Mammary epithelial cell (primary cell): ENCODE measurements at regions of chr6 and their contacts with region 1.

Region 1: DNA sequence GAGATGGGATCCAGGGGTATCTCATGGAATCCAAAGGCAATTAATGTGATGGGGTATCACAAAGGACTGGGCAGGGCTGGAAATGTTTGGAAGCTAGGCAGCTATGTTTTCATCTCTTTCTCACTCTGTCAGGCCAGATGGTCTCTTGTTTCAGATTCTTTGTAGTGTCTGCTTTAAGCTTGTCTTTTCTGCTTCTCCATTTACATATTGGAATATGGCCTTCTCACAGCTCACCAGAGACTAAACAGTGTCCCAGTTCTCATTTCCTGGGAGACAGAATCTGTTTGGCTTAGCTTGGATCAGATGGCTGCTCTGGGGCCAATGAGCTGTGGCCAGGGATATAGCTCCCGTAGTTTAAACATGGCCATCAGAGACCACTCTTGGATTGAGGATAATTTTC is 78.9 kb downstream of the SLC35F1 start:
- DNase-seq: no peak
- H3K4me3 ChIP-seq: no peak overlapping the region
- H3K27ac ChIP-seq: no peak overlapping the region
- H3K4me1 ChIP-seq: no peaks in the 10 kb centered on the region
- H3K27me3 ChIP-seq: no peaks in the 10 kb centered on the region
- CTCF ChIP-seq: no peak

Region 2: DNA sequence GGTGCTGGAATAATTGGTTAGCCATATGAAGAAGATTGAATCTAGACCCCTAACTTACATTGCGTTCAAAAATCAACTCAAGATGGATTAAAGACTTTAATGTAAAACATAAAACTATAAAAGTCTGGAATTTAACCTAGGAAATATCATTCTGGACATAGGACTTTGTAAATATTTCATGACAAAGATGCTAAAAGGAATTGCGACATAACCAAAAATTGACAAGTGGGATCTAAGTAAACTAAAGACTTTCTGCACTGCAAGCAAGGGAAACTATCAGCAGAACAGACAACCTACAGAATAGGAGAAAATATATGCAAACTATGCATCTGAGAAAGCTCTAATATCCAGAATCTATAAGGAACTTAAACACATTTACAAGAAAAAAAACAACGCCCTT is 124.4 kb before region 1 on chr6:
- CTCF ChIA-PET with region 1: no interaction called
- dilution Hi-C with region 1: no loop called
- in situ Hi-C with region 1: no loop called
- intact Hi-C with region 1: no loop called
- DNase-seq: no peak
- H3K4me3 ChIP-seq: no peak overlapping the region
- H3K27ac ChIP-seq: no peak overlapping the region
- H3K4me1 ChIP-seq: no peaks in the 10 kb centered on the region
- H3K27me3 ChIP-seq: no peaks in the 10 kb centered on the region
- CTCF ChIP-seq: no peak

Region 3: DNA sequence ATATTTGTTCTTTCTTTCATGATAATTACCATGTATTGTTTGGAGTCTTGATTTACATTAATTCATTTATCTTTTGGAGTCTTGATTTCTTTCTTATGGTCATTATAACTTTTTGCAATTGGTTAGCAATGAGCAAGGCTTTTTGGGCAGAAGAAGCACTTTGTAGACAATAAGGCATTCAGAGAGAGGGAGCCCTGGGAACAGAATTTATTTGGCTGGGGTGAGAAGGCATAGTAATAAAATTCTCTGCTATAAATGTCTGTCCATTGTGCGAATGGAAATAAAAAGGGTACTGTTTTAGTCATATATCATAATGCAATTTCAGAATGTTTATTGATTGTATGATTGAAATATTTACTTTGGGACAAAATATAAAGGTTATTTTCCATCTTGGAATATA is 68.2 kb after region 1 on chr6:
- CTCF ChIA-PET with region 1: no interaction called
- dilution Hi-C with region 1: no loop called
- in situ Hi-C with region 1: no loop called
- intact Hi-C with region 1: no loop called
- DNase-seq: no peak
- H3K4me3 ChIP-seq: no peak overlapping the region
- H3K27ac ChIP-seq: no peak overlapping the region
- H3K4me1 ChIP-seq: no peaks in the 10 kb centered on the region
- H3K27me3 ChIP-seq: no peaks in the 10 kb centered on the region
- CTCF ChIP-seq: no peak

Region 4: DNA sequence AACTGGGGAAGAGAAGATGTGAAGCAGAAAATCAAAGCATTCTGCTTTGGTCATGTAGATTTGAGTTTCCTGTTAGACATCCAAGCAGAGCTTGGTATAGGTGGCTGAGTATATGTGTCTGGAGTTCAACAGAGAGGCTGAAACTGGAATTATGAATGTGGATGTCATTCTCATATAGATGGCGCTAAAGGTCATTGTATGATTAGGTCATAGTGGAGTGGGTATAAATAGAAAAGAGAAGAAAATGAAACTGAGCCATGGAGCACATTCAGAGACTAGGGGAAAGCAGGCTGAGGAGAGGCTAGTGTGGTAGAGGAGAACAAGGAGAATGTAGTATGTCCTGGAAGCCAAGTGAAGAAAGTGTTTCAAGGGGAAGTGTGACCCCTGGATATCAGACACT is 266.6 kb after region 1 on chr6:
- CTCF ChIA-PET with region 1: no interaction called
- dilution Hi-C with region 1: no loop called
- in situ Hi-C with region 1: loop called (anchors 10 to 25 kb)
- intact Hi-C with region 1: no loop called
- DNase-seq: no peak
- H3K4me3 ChIP-seq: no peak overlapping the region
- H3K27ac ChIP-seq: no peak overlapping the region
- H3K4me1 ChIP-seq: no peaks in the 10 kb centered on the region
- H3K27me3 ChIP-seq: no peaks in the 10 kb centered on the region
- CTCF ChIP-seq: no peak